ENCODE measurements at regions of chr2 and their contacts with region 1.

Region 1: GRCh38 chr2:72973566-72974435 is 56.5 kb downstream of the EMX1 start:
- DNase-seq: peak; percentile 64
- H3K4me3 Mint-ChIP-seq: no peak overlapping the region
- H3K27ac Mint-ChIP-seq: no peak overlapping the region
- H3K4me1 Mint-ChIP-seq: peaks cover 2% of the 10 kb centered on the region
- H3K27me3 Mint-ChIP-seq: peaks cover 13% of the 10 kb centered on the region

Region 2: DNA sequence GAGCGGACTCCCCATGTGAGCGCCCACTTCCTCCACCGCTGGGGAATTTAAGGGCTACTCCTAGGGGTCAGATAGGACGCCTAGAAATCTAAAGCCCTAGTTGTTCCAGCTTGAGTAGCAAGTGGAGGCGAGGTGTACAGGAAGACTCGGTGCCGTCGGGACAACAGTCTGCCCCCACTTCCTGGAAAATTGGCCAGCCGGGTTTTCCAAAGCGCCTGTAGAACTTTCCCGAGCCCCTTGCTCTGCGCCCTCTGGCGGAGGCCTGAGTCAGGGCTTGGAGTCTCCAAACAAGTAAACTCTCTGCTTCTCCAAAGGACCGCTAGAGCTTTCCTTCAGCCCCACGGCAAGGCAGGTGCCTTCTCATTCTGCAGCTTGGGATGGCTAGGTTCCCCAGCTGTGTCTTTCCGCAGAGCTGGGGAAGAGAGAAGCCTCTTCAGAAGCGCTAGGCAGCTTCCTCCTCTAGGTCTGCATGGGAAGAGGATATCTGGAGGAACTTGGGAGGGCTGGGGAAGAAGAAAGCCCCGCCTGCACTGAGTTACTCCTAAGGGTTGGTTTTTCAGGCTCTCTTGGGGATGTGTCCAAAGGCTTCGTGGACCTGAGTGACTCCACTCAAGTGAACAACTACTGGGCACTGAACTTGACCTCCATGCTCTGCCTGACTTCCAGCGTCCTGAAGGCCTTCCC is 85.9 kb before region 1 on chr2:
- CTCF ChIA-PET with region 1: interaction called, 16 read pairs
- POLR2A ChIA-PET with region 1: no interaction called
- DNase-seq: peak; percentile 47
- H3K4me3 Mint-ChIP-seq: peak overlapping the region; percentile 63
- H3K27ac Mint-ChIP-seq: no peak overlapping the region
- H3K4me1 Mint-ChIP-seq: peaks cover 3% of the 10 kb centered on the region
- H3K27me3 Mint-ChIP-seq: peaks cover 52% of the 10 kb centered on the region

Region 3: GRCh38 chr2:72985895-72986683 is 12.3 kb after region 1 on chr2:
- CTCF ChIA-PET with region 1: interaction called, 11 read pairs
- POLR2A ChIA-PET with region 1: no interaction called
- DNase-seq: no peak
- H3K4me3 Mint-ChIP-seq: no peak overlapping the region
- H3K27ac Mint-ChIP-seq: no peak overlapping the region
- H3K4me1 Mint-ChIP-seq: no peaks in the 10 kb centered on the region
- H3K27me3 Mint-ChIP-seq: no peaks in the 10 kb centered on the region

Measured in activated CD4-positive, alpha-beta T cell treated with anti-CD3 and anti-CD28 coated beads, Interleukin-2, amount 10 ng/mL, durations not matched to agents 7 days and 5 days (primary cell).